Calu3 (cell line): ENCODE measurements at regions of chr3 and their contacts with region 1.

Region 1: GRCh38 chr3:128584412-128585020 is 66.1 kb downstream of the RPN1 start:
- DNase-seq: peak; percentile 96
- H3K4me3 Mint-ChIP-seq: no peak overlapping the region
- H3K27ac Mint-ChIP-seq: no peak overlapping the region
- H3K4me1 Mint-ChIP-seq: peaks cover 16% of the 10 kb centered on the region
- H3K27me3 Mint-ChIP-seq: peaks cover 41% of the 10 kb centered on the region
- CTCF ChIP-seq: peak; percentile 88

Region 2: DNA sequence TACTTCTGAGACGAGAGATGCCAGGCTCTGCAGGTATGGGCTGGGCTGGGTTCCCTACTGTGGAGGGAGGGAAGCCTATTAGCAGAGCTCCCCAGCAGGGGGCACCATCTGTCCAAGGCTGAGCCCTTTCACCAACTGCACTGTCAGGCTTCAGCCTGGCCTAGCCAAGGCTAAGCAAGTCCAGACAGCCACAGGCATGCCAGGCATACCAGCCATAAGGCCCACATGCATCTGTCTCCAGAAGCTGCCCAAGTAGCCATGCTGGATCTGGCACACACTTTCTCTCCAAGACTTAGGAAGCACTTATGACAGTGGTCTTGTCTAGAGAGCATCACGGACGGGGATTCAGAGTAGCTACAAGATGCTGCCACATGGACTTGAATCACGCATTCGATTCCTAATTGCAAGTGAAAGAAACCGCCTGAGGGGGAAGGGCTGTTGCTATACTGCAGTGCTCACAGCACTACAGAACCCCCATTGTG is 489.3 kb before region 1 on chr3:
- CTCF ChIA-PET with region 1: interaction called, 6 read pairs
- intact Hi-C with region 1: loop called (anchors 10 kb)
- DNase-seq: peak; percentile 93
- H3K4me3 Mint-ChIP-seq: no peak overlapping the region
- H3K27ac Mint-ChIP-seq: no peak overlapping the region
- H3K4me1 Mint-ChIP-seq: peaks cover 23% of the 10 kb centered on the region
- H3K27me3 Mint-ChIP-seq: no peaks in the 10 kb centered on the region
- CTCF ChIP-seq: peak; percentile 91

Region 3: DNA sequence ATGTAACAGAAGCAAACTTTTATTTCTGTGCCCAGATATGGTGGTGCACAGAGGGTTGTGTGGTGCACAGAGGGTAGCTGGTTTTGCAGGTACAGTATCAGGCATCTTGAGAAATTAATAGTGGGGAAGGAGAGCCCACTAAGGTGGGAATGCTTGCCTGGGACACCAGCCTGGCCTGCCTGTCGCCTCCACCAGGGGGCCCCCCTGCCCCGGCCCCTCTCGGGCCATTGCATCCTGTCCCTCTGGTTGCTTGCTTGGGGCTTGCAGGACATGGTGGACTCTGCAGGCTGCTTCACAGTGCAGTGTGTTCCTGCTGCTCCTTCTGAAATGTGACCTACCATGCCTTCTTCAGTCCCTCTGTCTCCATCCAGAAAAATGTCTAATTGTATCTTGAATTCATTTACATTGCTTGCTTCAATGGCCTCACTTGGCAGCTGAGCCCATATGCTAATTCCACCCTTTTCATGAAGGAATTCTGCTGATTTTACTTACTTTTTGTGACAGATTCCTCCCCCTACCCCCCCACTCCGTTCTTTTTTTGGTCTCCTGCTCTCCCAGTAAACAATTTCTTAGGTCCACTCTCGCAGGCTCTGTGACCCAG is 357.6 kb before region 1 on chr3:
- CTCF ChIA-PET with region 1: no interaction called
- intact Hi-C with region 1: loop called (anchors 1 kb)
- DNase-seq: peak; percentile 83
- H3K4me3 Mint-ChIP-seq: no peak overlapping the region
- H3K27ac Mint-ChIP-seq: no peak overlapping the region
- H3K4me1 Mint-ChIP-seq: no peaks in the 10 kb centered on the region
- H3K27me3 Mint-ChIP-seq: no peaks in the 10 kb centered on the region
- CTCF ChIP-seq: peak; percentile 93

Region 4: GRCh38 chr3:128426128-128426921 is 158.2 kb before region 1 on chr3:
- CTCF ChIA-PET with region 1: interaction called, 12 read pairs
- intact Hi-C with region 1: loop called (anchors 1 kb)
- DNase-seq: peak; percentile 88
- H3K4me3 Mint-ChIP-seq: peak overlapping the region; percentile 22
- H3K27ac Mint-ChIP-seq: no peak overlapping the region
- H3K4me1 Mint-ChIP-seq: peaks cover 16% of the 10 kb centered on the region
- H3K27me3 Mint-ChIP-seq: peaks cover 33% of the 10 kb centered on the region
- CTCF ChIP-seq: peak; percentile 98

Region 5: DNA sequence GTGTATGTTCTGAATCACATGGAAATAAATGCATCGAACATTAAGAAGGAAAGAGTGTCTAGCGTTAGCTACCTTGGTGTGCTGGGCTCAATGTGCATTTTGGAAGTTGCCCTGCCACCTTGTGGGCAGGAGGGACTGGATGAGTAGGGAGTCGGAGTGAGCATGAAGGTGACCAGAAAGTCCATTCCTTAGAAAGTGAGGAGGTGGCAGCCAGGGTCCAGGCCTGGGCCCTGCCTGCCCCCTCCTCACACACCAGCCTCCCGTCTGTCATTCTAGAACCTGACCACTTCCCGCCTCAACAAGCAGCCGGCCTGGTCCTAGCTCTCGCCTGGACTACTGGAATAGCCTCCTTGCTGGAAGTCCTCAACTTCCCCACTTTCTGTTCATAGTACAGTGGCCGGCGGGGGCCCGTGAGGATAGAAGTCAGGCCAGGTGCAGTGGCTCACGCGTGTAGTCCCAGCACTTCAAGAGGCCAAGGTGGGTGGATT is 81.3 kb before region 1 on chr3:
- CTCF ChIA-PET with region 1: no interaction called
- intact Hi-C with region 1: loop called (anchors 5 kb)
- DNase-seq: peak; percentile 34
- H3K4me3 Mint-ChIP-seq: no peak overlapping the region
- H3K27ac Mint-ChIP-seq: no peak overlapping the region
- H3K4me1 Mint-ChIP-seq: peaks cover 5% of the 10 kb centered on the region
- H3K27me3 Mint-ChIP-seq: peaks cover 24% of the 10 kb centered on the region
- CTCF ChIP-seq: peak; percentile 22